ENCODE measurements at regions of chrX and their contacts with region 1.

Region 1: DNA sequence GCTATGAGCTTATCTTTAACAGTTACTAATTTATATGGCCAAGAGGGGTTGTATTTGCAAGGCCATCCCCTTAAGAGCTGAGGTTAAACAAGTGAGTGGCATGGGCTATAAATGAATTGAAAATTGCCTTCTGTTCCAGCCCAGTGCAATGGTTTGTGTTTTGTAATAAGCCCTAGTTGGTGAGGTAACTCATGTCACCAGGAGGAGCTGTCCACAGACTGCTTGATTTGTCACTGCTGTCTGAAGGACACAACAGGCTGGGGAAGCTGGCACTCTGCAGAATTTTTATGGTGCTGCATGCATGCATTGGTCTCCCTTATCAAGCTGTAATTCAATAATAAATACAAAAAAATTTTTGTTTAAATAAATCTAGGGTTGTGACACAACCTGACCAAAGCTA is 223.8 kb downstream of the IL1RAPL2 start:
- DNase-seq: no peak
- H3K4me3 ChIP-seq: no peak overlapping the region
- H3K27ac ChIP-seq: no peak overlapping the region
- H3K4me1 ChIP-seq: no peaks in the 10 kb centered on the region
- H3K27me3 ChIP-seq: no peaks in the 10 kb centered on the region
- CTCF ChIP-seq: no peak
- EP300 ChIP-seq: no peak
- POLR2A ChIP-seq: no peak

Region 2: GRCh38 chrX:104842326-104843045 is 52.7 kb after region 1 on chrX:
- intact Hi-C with region 1: loop called (anchors 10 kb)
- DNase-seq: no peak
- H3K4me3 ChIP-seq: no peak overlapping the region
- H3K27ac ChIP-seq: no peak overlapping the region
- H3K4me1 ChIP-seq: no peaks in the 10 kb centered on the region
- H3K27me3 ChIP-seq: no peaks in the 10 kb centered on the region
- CTCF ChIP-seq: no peak
- EP300 ChIP-seq: no peak
- POLR2A ChIP-seq: no peak

Measured in sigmoid colon (tissue), 7 donors.